GM13977 (cell line): ENCODE measurements at regions of chr13 and their contacts with region 1.

Region 1: GRCh38 chr13:85799097-85799582 is at the start of gene SLITRK6:
- DNase-seq: no peak
- CTCF ChIP-seq: no peak

Region 2: GRCh38 chr13:84896128-84896527 is 903.0 kb before region 1 on chr13:
- in situ Hi-C with region 1: loop called (anchors 10 kb)
- DNase-seq: peak; percentile 55
- CTCF ChIP-seq: peak; percentile 77

Region 3: GRCh38 chr13:86954341-86954740 is 1155.2 kb after region 1 on chr13:
- in situ Hi-C with region 1: no loop called
- DNase-seq: no peak
- CTCF ChIP-seq: no peak